Activated B cell treated with CpG ODN at 0.5 μM for 24 hours (primary cell): ENCODE measurements at regions of chr6 and their contacts with region 1.

Region 1: GRCh38 chr6:135535989-135536414 is 38.5 kb upstream of the AHI1 start:
- DNase-seq: no peak
- ATAC-seq: no peak
- H3K4me3 Mint-ChIP-seq: no peak overlapping the region
- H3K27ac Mint-ChIP-seq: no peak overlapping the region
- H3K4me1 Mint-ChIP-seq: peaks cover 2% of the 10 kb centered on the region
- H3K27me3 Mint-ChIP-seq: peaks cover 13% of the 10 kb centered on the region
- CTCF ChIP-seq: no peak

Region 2: DNA sequence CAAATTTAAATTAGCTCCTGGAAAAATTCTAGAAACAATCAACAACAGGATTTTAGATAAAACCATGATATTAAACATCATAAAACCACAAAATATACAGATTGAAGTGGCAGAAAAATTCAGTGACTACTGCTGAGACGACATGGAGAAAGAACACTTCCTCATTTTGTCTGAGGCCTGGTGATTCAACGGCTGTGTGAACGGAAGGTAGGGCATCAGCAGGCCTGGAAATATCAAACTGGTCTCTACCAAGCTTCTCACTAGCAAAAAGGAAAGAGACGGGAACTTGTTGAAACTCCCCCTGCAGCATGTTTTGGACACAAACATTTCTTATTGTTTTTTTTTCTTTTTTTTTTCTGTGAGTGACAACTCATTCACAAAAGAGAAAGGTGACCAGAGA is 19.5 kb after region 1 on chr6:
- CTCF ChIA-PET with region 1: interaction called, 10 read pairs
- POLR2A ChIA-PET with region 1: no interaction called
- intact Hi-C with region 1: no loop called
- DNase-seq: no peak
- ATAC-seq: peak; percentile 83
- H3K4me3 Mint-ChIP-seq: no peak overlapping the region
- H3K27ac Mint-ChIP-seq: no peak overlapping the region
- H3K4me1 Mint-ChIP-seq: peaks cover 11% of the 10 kb centered on the region
- H3K27me3 Mint-ChIP-seq: peaks cover 2% of the 10 kb centered on the region
- CTCF ChIP-seq: no peak

Region 3: GRCh38 chr6:135675862-135676261 is 139.9 kb after region 1 on chr6:
- CTCF ChIA-PET with region 1: interaction called, 6 read pairs
- POLR2A ChIA-PET with region 1: no interaction called
- intact Hi-C with region 1: loop called (anchors 1 kb)
- DNase-seq: no peak
- ATAC-seq: peak; percentile 70
- H3K4me3 Mint-ChIP-seq: no peak overlapping the region
- H3K27ac Mint-ChIP-seq: no peak overlapping the region
- H3K4me1 Mint-ChIP-seq: no peaks in the 10 kb centered on the region
- H3K27me3 Mint-ChIP-seq: no peaks in the 10 kb centered on the region
- CTCF ChIP-seq: peak; percentile 43